ENCODE measurements at regions of chr16 and their contacts with region 1.

Region 1: DNA sequence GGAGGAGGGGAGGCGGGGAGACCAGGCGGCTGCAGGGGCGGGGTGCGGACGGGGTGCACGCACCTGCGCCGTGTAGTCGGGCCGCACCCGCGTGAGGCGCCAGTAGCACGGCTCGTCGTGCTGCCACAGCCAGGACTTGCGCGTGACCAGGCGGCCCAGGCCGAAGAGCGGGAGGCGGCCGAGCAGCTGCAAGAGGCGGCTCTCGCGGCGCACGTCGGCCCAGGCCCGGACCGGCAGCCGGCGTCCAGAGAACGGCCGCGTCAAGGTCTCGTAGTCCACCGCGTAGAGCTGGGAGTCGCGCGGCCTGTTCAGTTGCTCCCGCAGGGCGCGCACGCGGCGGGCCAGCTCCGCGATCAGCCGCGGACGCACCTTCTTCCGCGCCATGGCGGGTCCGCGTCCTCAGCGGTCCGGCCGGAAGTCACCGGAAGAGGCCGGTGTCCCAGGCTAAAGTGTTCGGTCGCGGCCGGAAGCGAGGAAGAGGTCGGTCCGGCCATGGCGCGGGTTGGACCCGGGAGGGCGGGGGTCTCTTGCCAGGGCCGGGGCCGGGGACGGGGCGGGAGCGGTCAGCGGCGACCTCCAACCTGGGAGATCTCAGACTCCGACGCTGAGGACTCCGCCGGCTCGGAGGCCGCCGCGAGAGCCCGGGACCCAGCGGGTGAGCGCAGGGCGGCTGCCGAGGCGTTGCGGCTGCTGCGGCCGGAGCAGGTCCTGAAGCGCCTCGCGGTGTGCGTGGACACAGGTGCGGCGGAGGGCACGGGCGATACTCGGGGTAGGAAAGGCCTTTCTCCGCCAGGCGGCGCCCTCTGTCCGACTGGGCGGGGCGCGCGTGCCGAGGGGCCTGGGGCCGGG is at the starts of genes EME2 and MRPS34:
- DNase-seq: peak; percentile 90
- ATAC-seq: peak; percentile 53
- H3K4me3 Mint-ChIP-seq: peak within 1 kb of the TSS; percentile 94
- H3K27ac Mint-ChIP-seq: peak within 1 kb of the TSS; percentile 99
- H3K4me1 Mint-ChIP-seq: peaks cover 9% of the 10 kb centered on the region
- H3K27me3 Mint-ChIP-seq: no peaks in the 10 kb centered on the region
- total RNA-seq, gene EME2: 13.1 to 18.4 TPM
- total RNA-seq, gene MRPS34: 146 to 175 TPM

Region 2: DNA sequence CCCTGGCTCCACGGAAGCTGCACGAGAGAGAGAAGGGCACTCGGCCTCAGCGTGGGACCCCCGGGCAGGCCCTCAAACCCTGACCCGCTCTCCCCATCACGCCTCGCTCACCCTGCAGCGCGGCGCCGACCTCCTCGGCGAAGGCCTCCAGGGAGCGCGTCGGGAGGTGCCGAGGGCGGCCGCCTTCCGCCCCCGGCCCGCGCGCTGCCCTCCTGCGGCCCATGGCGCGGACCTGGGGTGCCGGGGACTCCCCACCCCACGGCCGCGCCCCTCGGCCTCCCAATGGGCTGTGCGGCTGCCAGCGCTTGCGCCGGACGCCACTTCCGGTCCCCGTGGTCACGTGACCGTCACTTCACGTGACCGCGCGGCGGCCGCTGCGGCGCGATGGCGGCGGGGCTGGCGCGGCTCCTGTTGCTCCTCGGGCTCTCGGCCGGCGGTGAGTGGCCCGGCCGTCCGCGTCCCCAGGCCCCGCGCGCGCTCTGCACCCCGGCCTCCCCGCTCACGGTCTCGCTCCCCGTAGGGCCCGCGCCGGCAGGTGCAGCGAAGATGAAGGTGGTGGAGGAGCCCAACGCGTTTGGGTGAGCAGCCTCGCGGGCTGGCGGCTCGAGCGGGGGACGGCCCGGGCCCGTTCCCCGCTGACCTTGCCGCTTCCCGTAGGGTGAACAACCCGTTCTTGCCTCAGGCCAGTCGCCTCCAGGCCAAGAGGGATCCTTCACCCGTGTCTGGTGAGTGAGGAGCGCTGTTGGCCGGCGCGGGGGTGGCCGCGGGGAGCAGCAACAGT is 421.2 kb before region 1 on chr16 and contains the starts of genes GNPTG and TSR3:
- CTCF ChIA-PET with region 1: no interaction called
- POLR2A ChIA-PET with region 1: no interaction called
- intact Hi-C with region 1: loop called in 1 of 2 experiments (anchors 5 kb)
- DNase-seq: peak; percentile 91
- ATAC-seq: peak; percentile 87
- H3K4me3 Mint-ChIP-seq: peak within 1 kb of the TSS; percentile 85
- H3K27ac Mint-ChIP-seq: peak within 1 kb of the TSS; percentile 79
- H3K4me1 Mint-ChIP-seq: peaks cover 37% of the 10 kb centered on the region
- H3K27me3 Mint-ChIP-seq: no peaks in the 10 kb centered on the region
- total RNA-seq, gene GNPTG: 16.3 to 17.4 TPM
- total RNA-seq, gene TSR3: 37.6 to 58.7 TPM

Region 3: GRCh38 chr16:1543085-1543896 is 229.7 kb before region 1 on chr16:
- CTCF ChIA-PET with region 1: no interaction called
- POLR2A ChIA-PET with region 1: no interaction called
- intact Hi-C with region 1: loop called in 1 of 2 experiments (anchors 2 kb)
- DNase-seq: peak; percentile 84
- ATAC-seq: peak; percentile 85
- H3K4me3 Mint-ChIP-seq: peak overlapping the region; percentile 71
- H3K27ac Mint-ChIP-seq: peak overlapping the region; percentile 99
- H3K4me1 Mint-ChIP-seq: peaks cover 78% of the 10 kb centered on the region
- H3K27me3 Mint-ChIP-seq: no peaks in the 10 kb centered on the region

Region 4: DNA sequence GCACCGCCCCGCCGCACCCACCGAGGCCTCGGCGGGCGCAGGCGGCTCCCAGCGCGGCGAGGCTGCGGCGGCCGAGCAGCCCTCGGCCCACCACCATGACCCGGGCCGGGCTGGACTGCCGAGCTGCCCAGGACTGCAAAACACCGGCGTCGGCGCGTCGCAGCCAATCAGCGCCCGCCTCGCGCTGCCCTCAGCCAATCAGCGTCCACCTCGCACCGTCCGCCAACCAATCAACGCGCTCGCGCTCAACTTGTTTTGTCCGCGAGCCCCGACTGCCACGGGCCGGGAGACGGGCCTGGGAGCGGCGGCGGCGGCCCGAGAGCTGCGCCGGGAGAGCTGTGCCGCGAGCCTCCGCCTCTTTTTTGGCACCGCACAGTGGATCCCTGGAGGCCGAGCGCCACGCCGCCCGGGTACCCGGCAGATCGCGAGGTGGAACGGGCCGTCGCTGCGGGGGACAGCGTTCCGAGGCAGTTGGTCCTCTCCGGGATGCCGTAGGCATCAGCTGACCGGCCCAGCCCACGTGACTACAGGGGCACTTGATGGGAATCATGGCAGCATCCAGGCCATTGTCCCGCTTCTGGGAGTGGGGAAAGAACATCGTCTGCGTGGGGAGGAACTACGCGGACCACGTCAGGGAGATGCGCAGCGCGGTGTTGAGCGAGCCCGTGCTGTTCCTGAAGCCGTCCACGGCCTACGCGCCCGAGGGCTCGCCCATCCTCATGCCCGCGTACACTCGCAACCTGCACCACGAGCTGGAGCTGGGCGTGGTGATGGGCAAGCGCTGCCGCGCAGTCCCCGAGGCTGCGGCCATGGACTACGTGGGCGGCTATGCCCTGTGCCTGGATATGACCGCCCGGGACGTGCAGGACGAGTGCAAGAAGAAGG is 54.0 kb after region 1 on chr16 and contains the starts of genes FAHD1 and HAGH:
- CTCF ChIA-PET with region 1: interaction called, 4 read pairs
- POLR2A ChIA-PET with region 1: no interaction called
- intact Hi-C with region 1: loop called in 1 of 2 experiments (anchors 1 kb)
- DNase-seq: peak; percentile 93
- ATAC-seq: peak; percentile 90
- H3K4me3 Mint-ChIP-seq: peak within 1 kb of the TSS; percentile 91
- H3K27ac Mint-ChIP-seq: peak within 1 kb of the TSS; percentile 89
- H3K4me1 Mint-ChIP-seq: peaks cover 27% of the 10 kb centered on the region
- H3K27me3 Mint-ChIP-seq: no peaks in the 10 kb centered on the region
- total RNA-seq, gene FAHD1: 11.6 to 11.9 TPM
- total RNA-seq, gene HAGH: 20.9 to 25.0 TPM

Region 5: GRCh38 chr16:1991948-1992703 is 219.2 kb after region 1 on chr16:
- CTCF ChIA-PET with region 1: no interaction called
- POLR2A ChIA-PET with region 1: no interaction called
- intact Hi-C with region 1: loop called in 1 of 2 experiments (anchors 5 kb)
- DNase-seq: peak; percentile 100
- ATAC-seq: peak; percentile 70
- H3K4me3 Mint-ChIP-seq: peak overlapping the region; percentile 56
- H3K27ac Mint-ChIP-seq: no peak overlapping the region
- H3K4me1 Mint-ChIP-seq: peaks cover 27% of the 10 kb centered on the region
- H3K27me3 Mint-ChIP-seq: peaks cover 15% of the 10 kb centered on the region

Measured in activated CD4-positive, alpha-beta T cell treated with anti-CD3 and anti-CD28 coated beads for 36 hours (primary cell).